ENCODE measurements at regions of chr5 and their contacts with region 1.

Region 1: DNA sequence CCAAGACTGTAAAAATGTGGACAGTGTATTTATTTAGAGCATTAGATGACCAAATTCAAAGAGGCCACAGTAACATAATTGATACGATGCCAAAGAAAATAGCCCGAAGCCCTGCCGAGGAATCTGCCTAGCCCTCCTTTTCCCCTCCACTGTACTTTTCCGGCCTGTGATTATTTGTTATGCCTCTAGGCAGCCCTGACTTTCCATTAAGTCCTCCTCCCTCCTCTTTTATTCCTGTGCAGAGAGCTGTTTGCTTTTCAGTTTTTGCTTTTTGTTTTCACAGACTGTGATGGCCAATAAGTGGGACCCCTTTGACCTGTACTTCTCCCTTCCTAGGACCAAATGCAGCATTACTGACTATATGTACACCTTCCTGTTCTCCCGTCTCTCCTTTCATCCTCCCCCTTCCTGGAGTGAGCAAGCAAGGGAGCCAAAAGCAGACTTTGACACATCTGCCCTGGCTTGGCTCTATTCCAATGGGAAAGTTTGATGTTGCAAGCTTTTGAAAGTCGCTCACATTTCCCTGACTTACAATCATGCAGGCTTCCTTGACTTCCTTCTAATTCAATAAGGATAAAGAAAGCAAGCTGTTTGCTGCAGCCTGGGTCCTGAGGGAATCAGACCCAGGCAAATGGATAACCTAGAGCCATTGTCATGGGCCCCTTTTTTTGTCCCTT is 76.1 kb downstream of the NREP start:
- DNase-seq: peak; percentile 98
- H3K4me3 Mint-ChIP-seq: peak overlapping the region; percentile 35
- H3K27ac Mint-ChIP-seq: peak overlapping the region; percentile 83
- H3K4me1 Mint-ChIP-seq: peaks cover 29% of the 10 kb centered on the region
- H3K27me3 Mint-ChIP-seq: no peaks in the 10 kb centered on the region
- CTCF ChIP-seq: no peak

Region 2: GRCh38 chr5:111655169-111655924 is 25.5 kb before region 1 on chr5:
- CTCF ChIA-PET with region 1: interaction called, 3 read pairs
- POLR2A ChIA-PET with region 1: no interaction called
- intact Hi-C with region 1: loop called (anchors 1 kb)
- DNase-seq: peak; percentile 94
- H3K4me3 Mint-ChIP-seq: no peak overlapping the region
- H3K27ac Mint-ChIP-seq: no peak overlapping the region
- H3K4me1 Mint-ChIP-seq: peaks cover 5% of the 10 kb centered on the region
- H3K27me3 Mint-ChIP-seq: no peaks in the 10 kb centered on the region
- CTCF ChIP-seq: no peak

Region 3: DNA sequence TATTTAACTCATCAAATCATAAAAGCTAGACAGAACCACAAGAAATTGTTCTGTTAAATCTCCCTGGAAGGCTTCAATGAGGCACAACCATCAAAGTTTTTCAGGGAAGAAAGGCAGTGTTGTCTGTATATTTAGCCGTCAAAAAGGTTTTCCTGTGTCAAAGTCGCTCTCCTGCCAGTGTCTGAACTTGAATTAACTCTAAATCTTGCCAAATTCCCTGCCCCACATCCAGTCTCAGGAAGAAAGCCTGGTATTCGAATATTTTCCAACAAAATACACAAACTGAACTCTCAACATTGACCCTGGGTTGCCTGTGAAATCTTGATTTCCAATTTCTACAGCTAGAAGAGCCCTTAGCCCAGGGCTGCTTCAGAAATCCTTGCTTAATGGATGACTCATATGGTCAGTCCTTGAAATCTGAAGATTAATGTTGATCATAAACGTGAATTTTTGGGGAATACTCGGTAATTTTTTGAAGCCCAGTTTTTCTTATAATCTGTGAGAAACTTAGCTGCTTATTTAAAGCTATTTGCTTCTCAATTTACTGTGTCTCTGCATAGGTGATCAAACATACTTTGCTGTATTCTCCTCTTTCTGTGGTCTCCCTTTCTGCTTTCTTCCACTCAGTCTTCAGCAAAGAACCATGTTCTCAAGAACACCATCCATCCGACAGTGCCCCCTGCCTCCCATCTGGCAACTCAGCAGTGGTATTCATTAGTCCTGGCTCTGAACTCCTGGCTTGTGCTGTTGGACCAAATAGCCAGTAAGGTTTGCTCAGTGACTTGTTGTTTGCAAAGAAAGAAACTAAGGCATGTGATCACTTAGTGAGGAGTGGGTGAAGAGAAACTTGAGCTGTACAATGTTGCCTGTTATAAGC is 17.2 kb after region 1 on chr5:
- CTCF ChIA-PET with region 1: interaction called, 4 read pairs
- POLR2A ChIA-PET with region 1: interaction called, 21 read pairs
- intact Hi-C with region 1: no loop called
- DNase-seq: peak; percentile 58
- H3K4me3 Mint-ChIP-seq: no peak overlapping the region
- H3K27ac Mint-ChIP-seq: peak overlapping the region; percentile 27
- H3K4me1 Mint-ChIP-seq: peaks cover 51% of the 10 kb centered on the region
- H3K27me3 Mint-ChIP-seq: no peaks in the 10 kb centered on the region
- CTCF ChIP-seq: no peak

Region 4: DNA sequence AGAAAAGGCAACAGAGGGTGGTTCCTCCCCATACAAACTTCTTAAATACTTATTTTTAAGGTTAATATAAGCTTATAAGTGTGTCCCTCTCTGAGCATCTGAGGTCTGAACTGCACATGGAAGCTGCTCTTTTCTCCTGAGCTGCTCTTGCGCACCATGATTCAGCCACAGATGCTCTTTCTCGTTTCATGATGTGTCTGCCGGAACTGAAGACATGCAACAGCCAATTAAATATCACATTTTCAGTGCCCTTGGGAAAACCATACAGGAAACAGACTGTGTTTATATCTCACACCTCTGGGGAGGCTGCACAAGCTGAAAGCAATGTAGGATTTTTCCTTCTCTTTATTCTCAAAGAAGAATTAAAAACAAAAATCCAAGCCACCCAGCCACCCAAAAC is 172.9 kb after region 1 on chr5:
- CTCF ChIA-PET with region 1: no interaction called
- POLR2A ChIA-PET with region 1: no interaction called
- intact Hi-C with region 1: loop called (anchors 10 kb)
- DNase-seq: no peak
- H3K4me3 Mint-ChIP-seq: no peak overlapping the region
- H3K27ac Mint-ChIP-seq: no peak overlapping the region
- H3K4me1 Mint-ChIP-seq: no peaks in the 10 kb centered on the region
- H3K27me3 Mint-ChIP-seq: no peaks in the 10 kb centered on the region
- CTCF ChIP-seq: no peak